ENCODE measurements at regions of chr15 and their contacts with region 1.

Region 1: GRCh38 chr15:98484908-98485307 is 163.4 kb upstream of the IGF1R start:
- DNase-seq: no peak
- H3K4me3 ChIP-seq: no peak overlapping the region
- H3K27ac ChIP-seq: no peak overlapping the region
- H3K4me1 ChIP-seq: no peaks in the 10 kb centered on the region
- H3K27me3 ChIP-seq: no peaks in the 10 kb centered on the region
- CTCF ChIP-seq: no peak
- POLR2A ChIP-seq: no peak

Region 2: GRCh38 chr15:98051734-98052133 is 433.2 kb before region 1 on chr15:
- intact Hi-C with region 1: no loop called
- DNase-seq: no peak
- H3K4me3 ChIP-seq: no peak overlapping the region
- H3K27ac ChIP-seq: no peak overlapping the region
- H3K4me1 ChIP-seq: no peaks in the 10 kb centered on the region
- H3K27me3 ChIP-seq: no peaks in the 10 kb centered on the region
- CTCF ChIP-seq: no peak
- POLR2A ChIP-seq: no peak

Region 3: DNA sequence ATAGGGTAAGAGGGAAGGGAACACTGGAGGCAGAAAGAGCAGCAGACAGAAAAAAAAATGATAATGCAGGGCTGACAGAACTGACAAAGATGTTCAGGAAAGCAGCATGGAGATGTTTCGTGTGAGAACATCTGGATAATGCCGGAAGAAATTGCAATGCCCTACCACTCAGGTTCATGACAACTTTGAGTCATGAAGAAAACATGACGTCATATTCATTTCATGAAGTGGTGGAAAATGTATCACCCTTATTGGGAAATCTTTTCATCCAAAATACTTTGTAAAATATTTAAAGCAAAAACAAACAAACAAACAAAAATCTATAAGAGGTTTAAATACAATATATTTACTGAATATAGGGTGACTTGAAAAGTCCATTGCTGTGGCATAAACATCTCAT is 142.0 kb before region 1 on chr15:
- intact Hi-C with region 1: loop called (anchors 5 kb)
- DNase-seq: no peak
- H3K4me3 ChIP-seq: no peak overlapping the region
- H3K27ac ChIP-seq: no peak overlapping the region
- H3K4me1 ChIP-seq: no peaks in the 10 kb centered on the region
- H3K27me3 ChIP-seq: peaks cover 0 to 3% (median 0%) of the 10 kb centered on the region in 4 donors
- CTCF ChIP-seq: no peak
- POLR2A ChIP-seq: no peak

Measured in esophagus squamous epithelium (tissue), 5 donors.